ENCODE measurements at regions of chr1 and their contacts with region 1.

Region 1: DNA sequence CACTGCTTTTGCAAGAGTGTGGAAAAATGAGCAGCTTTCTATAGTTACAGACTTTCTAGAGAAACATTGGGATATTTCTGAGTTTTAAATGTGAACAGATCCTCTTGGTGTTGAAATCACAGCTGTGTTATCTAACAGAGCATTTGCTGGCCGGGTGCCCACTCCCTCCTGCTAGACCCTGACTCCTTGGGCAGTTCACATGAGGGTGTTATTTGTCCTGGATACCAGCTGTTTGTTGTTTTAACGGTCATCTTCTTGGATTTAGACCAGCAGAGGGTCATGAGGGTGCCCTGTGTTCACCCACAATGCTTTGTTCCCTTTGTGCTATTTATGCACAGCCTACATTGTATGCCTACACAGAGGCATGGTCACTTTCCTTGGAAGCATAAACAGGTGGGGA is 67.1 kb downstream of the CENPF start:
- DNase-seq: peak; percentile 67
- ATAC-seq: peak; percentile 86
- H3K4me3 ChIP-seq: no peak overlapping the region
- H3K27ac ChIP-seq: peak overlapping the region; percentile 49
- H3K4me1 ChIP-seq: peaks cover 17% of the 10 kb centered on the region
- H3K27me3 ChIP-seq: no peaks in the 10 kb centered on the region
- CTCF ChIP-seq: no peak
- EP300 ChIP-seq: peak in 1 of 2 experiments; percentile 46; a peak in 1 of 4 replicates
- POLR2A ChIP-seq: no peak
- RAD21 ChIP-seq: no peak

Region 2: DNA sequence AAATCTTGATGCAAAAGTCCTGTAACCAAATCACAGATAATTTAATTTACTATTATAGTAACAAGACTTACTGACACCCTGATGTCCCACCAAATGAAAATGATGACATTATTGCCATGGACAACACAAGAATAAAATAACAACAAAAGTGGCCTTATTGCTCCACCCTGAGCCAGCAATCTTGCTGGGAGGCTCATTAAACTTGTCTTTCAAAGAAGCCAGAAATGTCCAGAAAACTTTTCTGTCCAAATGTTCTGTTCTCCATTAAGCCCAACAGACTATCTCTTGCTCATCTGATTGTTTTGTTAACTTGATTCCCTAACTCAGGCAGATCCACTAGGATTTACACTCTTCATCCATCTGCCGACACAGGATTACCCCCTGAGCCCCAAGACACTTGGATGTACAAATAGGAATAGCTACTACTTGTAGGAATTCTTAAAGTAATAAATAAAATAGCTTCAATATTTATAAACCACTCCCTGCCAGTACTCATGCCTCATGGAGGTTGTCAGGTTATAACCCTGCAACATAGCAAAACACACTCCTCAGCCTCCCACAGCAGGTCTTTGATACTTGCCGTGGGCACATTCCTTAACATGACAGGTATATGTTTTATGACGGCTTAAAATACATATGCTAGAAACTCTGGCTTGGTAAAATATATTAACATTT is 203.6 kb before region 1 on chr1:
- CTCF ChIA-PET with region 1: no interaction called
- POLR2A ChIA-PET with region 1: no interaction called
- in situ Hi-C with region 1: no loop called
- intact Hi-C with region 1: no loop called
- DNase-seq: no peak
- ATAC-seq: no peak
- H3K4me3 ChIP-seq: no peak overlapping the region
- H3K27ac ChIP-seq: no peak overlapping the region
- H3K4me1 ChIP-seq: peaks cover 23% of the 10 kb centered on the region
- H3K27me3 ChIP-seq: no peaks in the 10 kb centered on the region
- CTCF ChIP-seq: no peak
- EP300 ChIP-seq: no peak
- POLR2A ChIP-seq: no peak
- RAD21 ChIP-seq: no peak

Region 3: GRCh38 chr1:214833178-214833756 is 163.2 kb after region 1 on chr1:
- CTCF ChIA-PET with region 1: no interaction called
- POLR2A ChIA-PET with region 1: no interaction called
- in situ Hi-C with region 1: loop called (anchors 10 kb)
- intact Hi-C with region 1: loop called (anchors 10 kb)
- DNase-seq: peak; percentile 91
- ATAC-seq: peak; percentile 67
- H3K4me3 ChIP-seq: no peak overlapping the region
- H3K27ac ChIP-seq: no peak overlapping the region
- H3K4me1 ChIP-seq: peaks cover 28% of the 10 kb centered on the region
- H3K27me3 ChIP-seq: no peaks in the 10 kb centered on the region
- CTCF ChIP-seq: no peak
- EP300 ChIP-seq: peak in 1 of 2 experiments; percentile 69; a peak in 2 of 4 replicates
- POLR2A ChIP-seq: no peak
- RAD21 ChIP-seq: no peak

Measured in HepG2 (cell line).